Activated B cell treated with CpG ODN at 0.5 μM for 24 hours (primary cell): ENCODE measurements at regions of chr1 and their contacts with region 1.

Region 1: GRCh38 chr1:9529190-9529589 is 10.1 kb upstream of the SLC25A33 start:
- DNase-seq: no peak
- ATAC-seq: no peak
- H3K4me3 Mint-ChIP-seq: no peak overlapping the region
- H3K27ac Mint-ChIP-seq: no peak overlapping the region
- H3K4me1 Mint-ChIP-seq: peaks cover 10% of the 10 kb centered on the region
- H3K27me3 Mint-ChIP-seq: no peaks in the 10 kb centered on the region
- CTCF ChIP-seq: no peak

Region 2: GRCh38 chr1:9045861-9046510 is 483.2 kb before region 1 on chr1:
- CTCF ChIA-PET with region 1: no interaction called
- POLR2A ChIA-PET with region 1: no interaction called
- intact Hi-C with region 1: no loop called
- DNase-seq: no peak
- ATAC-seq: no peak
- H3K4me3 Mint-ChIP-seq: no peak overlapping the region
- H3K27ac Mint-ChIP-seq: no peak overlapping the region
- H3K4me1 Mint-ChIP-seq: peaks cover 10% of the 10 kb centered on the region
- H3K27me3 Mint-ChIP-seq: no peaks in the 10 kb centered on the region
- CTCF ChIP-seq: no peak

Region 3: GRCh38 chr1:9466780-9467758 is 62.1 kb before region 1 on chr1:
- CTCF ChIA-PET with region 1: no interaction called
- POLR2A ChIA-PET with region 1: no interaction called
- intact Hi-C with region 1: no loop called
- DNase-seq: no peak
- ATAC-seq: no peak
- H3K4me3 Mint-ChIP-seq: no peak overlapping the region
- H3K27ac Mint-ChIP-seq: no peak overlapping the region
- H3K4me1 Mint-ChIP-seq: no peaks in the 10 kb centered on the region
- H3K27me3 Mint-ChIP-seq: peaks cover 14% of the 10 kb centered on the region
- CTCF ChIP-seq: no peak

Region 4: GRCh38 chr1:9500756-9501754 is 28.1 kb before region 1 on chr1:
- CTCF ChIA-PET with region 1: interaction called, 3 read pairs
- POLR2A ChIA-PET with region 1: no interaction called
- intact Hi-C with region 1: loop called (anchors 1 kb)
- DNase-seq: no peak
- ATAC-seq: no peak
- H3K4me3 Mint-ChIP-seq: no peak overlapping the region
- H3K27ac Mint-ChIP-seq: no peak overlapping the region
- H3K4me1 Mint-ChIP-seq: no peaks in the 10 kb centered on the region
- H3K27me3 Mint-ChIP-seq: peaks cover 21% of the 10 kb centered on the region
- CTCF ChIP-seq: no peak

Region 5: GRCh38 chr1:9518454-9518998 is 10.7 kb before region 1 on chr1:
- CTCF ChIA-PET with region 1: no interaction called
- POLR2A ChIA-PET with region 1: no interaction called
- intact Hi-C with region 1: no loop called
- DNase-seq: no peak
- ATAC-seq: no peak
- H3K4me3 Mint-ChIP-seq: no peak overlapping the region
- H3K27ac Mint-ChIP-seq: no peak overlapping the region
- H3K4me1 Mint-ChIP-seq: no peaks in the 10 kb centered on the region
- H3K27me3 Mint-ChIP-seq: peaks cover 2% of the 10 kb centered on the region
- CTCF ChIP-seq: no peak

Region 6: GRCh38 chr1:9861360-9861759 is 332.2 kb after region 1 on chr1:
- CTCF ChIA-PET with region 1: no interaction called
- POLR2A ChIA-PET with region 1: no interaction called
- intact Hi-C with region 1: no loop called
- DNase-seq: no peak
- ATAC-seq: no peak
- H3K4me3 Mint-ChIP-seq: no peak overlapping the region
- H3K27ac Mint-ChIP-seq: no peak overlapping the region
- H3K4me1 Mint-ChIP-seq: peaks cover 2% of the 10 kb centered on the region
- H3K27me3 Mint-ChIP-seq: no peaks in the 10 kb centered on the region
- CTCF ChIP-seq: no peak